AG04450 (cell line): ENCODE measurements at regions of chr11 and their contacts with region 1.

Region 1: DNA sequence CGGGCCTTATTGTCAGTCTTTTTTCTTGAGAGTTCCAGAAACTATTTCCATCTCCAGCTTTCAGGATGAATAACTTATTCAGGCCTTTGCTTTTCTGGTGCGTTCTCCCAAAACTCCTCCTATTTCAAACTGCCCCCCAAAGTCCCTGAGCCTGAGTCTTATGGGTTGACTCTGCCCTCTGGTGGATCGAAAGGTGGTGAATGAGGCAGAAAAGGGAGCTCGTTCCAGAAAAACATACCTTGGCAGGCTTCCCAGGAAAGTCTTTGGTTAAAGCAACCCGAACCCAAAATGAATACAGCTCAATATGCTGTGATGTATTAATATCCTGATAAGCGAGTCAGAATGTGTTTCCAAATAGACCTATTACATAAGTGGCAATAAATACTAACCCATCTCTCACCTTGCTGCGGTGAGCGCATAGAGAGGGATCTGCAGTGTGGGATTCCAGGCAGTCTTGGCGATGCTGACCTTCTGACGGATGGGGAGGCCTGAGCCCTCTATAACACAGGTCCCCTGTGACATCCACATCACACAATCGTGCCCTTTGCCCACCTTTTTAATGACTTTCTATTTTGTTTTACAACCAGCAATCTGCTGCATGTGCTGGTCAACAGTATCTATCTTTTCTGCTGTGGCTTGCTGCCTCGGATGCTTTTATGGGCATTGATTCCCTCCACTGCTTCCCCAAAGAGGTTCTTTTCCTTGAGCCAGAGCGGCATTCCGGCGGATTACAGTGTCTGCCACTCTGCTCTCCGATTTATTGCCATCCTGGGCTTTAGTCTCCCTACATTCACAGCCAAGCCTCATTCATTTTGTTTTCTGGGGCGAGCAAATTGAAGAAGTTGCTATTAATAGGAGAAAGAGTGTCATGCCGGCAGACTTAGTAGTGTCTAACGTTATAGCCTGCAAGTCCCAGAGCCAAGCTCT is 756.8 kb downstream of the NTM start:
- DNase-seq: peak; percentile 84
- H3K4me3 ChIP-seq: peak overlapping the region; percentile 45
- H3K27ac ChIP-seq: peak overlapping the region; percentile 47
- H3K27me3 ChIP-seq: no peaks in the 10 kb centered on the region
- CTCF ChIP-seq: peak; percentile 90

Region 2: DNA sequence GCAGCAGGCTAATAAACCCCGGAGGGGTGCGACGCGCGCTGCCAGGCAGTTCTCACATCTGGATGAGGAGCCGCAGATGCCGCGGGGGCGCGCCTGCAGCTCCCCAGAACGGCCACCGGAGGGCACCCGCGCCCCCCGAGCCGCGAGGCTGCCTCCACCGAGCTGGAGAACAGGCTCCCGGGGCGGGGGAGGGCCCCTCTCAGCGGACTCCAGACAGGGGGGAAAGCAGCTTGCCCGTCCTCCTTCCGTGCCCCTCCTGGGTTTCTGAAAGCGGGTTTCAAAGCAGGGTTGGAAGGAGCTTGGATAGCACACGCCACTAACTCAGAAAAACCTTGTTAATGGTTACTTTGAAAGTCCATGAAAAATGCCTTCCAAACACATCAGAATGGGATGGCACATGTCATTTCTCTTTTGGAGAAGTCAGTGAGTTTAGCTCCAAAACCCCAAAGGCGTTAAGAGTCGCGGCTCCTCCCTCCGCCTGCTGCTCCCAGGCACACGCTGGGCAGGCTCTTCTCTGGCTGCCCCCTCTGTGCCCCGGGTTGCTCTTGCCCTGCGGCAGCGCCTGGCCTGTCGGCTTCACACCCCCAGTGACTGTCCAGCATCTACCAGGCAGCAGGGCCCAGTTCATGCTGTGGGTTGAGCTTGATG is 439.1 kb before region 1 on chr11:
- CTCF ChIA-PET with region 1: interaction called, 33 read pairs
- POLR2A ChIA-PET with region 1: no interaction called
- DNase-seq: no peak
- H3K4me3 ChIP-seq: peak overlapping the region; percentile 46
- H3K27ac ChIP-seq: no peak overlapping the region
- H3K27me3 ChIP-seq: peaks cover 11% of the 10 kb centered on the region
- CTCF ChIP-seq: peak; percentile 89

Region 3: GRCh38 chr11:131867457-131868257 is 259.6 kb before region 1 on chr11:
- CTCF ChIA-PET with region 1: interaction called, 250 read pairs
- POLR2A ChIA-PET with region 1: no interaction called
- DNase-seq: peak; percentile 81
- H3K4me3 ChIP-seq: no peak overlapping the region
- H3K27ac ChIP-seq: no peak overlapping the region
- H3K27me3 ChIP-seq: no peaks in the 10 kb centered on the region
- CTCF ChIP-seq: peak; percentile 97

Region 4: GRCh38 chr11:131904756-131905155 is 222.5 kb before region 1 on chr11:
- CTCF ChIA-PET with region 1: interaction called, 31 read pairs
- POLR2A ChIA-PET with region 1: interaction called, 3 read pairs
- DNase-seq: no peak
- H3K4me3 ChIP-seq: no peak overlapping the region
- H3K27ac ChIP-seq: no peak overlapping the region
- H3K27me3 ChIP-seq: no peaks in the 10 kb centered on the region
- CTCF ChIP-seq: no peak

Region 5: GRCh38 chr11:131985846-131986301 is 141.4 kb before region 1 on chr11:
- CTCF ChIA-PET with region 1: interaction called, 10 read pairs
- POLR2A ChIA-PET with region 1: no interaction called
- DNase-seq: no peak
- H3K4me3 ChIP-seq: no peak overlapping the region
- H3K27ac ChIP-seq: no peak overlapping the region
- H3K27me3 ChIP-seq: no peaks in the 10 kb centered on the region
- CTCF ChIP-seq: no peak

Region 6: GRCh38 chr11:132062541-132062940 is 64.7 kb before region 1 on chr11:
- CTCF ChIA-PET with region 1: interaction called, 12 read pairs
- POLR2A ChIA-PET with region 1: no interaction called
- DNase-seq: no peak
- H3K4me3 ChIP-seq: no peak overlapping the region
- H3K27ac ChIP-seq: no peak overlapping the region
- H3K27me3 ChIP-seq: no peaks in the 10 kb centered on the region
- CTCF ChIP-seq: no peak

Region 7: DNA sequence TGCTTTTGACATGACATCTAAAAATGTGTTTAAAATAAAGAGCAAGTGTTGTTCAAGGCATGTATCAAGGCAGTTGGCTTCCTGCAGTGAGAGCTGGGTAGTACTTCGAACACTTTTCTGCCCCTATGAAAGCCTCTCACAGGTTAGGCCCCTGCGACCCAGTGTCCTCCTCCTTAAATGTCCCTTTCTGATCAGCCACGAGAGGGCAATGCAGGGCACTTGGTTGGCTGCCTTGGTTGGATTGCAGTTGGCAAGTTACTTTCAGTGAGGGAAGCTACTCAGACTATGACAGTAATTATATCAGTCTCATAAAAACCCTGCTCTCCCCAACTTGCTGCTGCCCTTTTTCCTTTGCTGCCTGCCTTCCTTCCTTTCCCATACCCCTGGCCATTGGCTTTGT is 13.1 kb before region 1 on chr11:
- CTCF ChIA-PET with region 1: interaction called, 53 read pairs
- POLR2A ChIA-PET with region 1: interaction called, 11 read pairs
- DNase-seq: no peak
- H3K4me3 ChIP-seq: no peak overlapping the region
- H3K27ac ChIP-seq: no peak overlapping the region
- H3K27me3 ChIP-seq: no peaks in the 10 kb centered on the region
- CTCF ChIP-seq: peak; percentile 37; the same call in 1 of the 2 replicates

Region 8: GRCh38 chr11:132496341-132496740 is 369.1 kb after region 1 on chr11:
- CTCF ChIA-PET with region 1: no interaction called
- POLR2A ChIA-PET with region 1: no interaction called
- DNase-seq: no peak
- H3K4me3 ChIP-seq: no peak overlapping the region
- H3K27ac ChIP-seq: no peak overlapping the region
- H3K27me3 ChIP-seq: no peaks in the 10 kb centered on the region
- CTCF ChIP-seq: no peak